Aorta (tissue), 5 donors: ENCODE measurements at regions of chr5 and their contacts with region 1.

Region 1: GRCh38 chr5:7251132-7251531 is 144.8 kb upstream of the ADCY2 start:
- DNase-seq: no peak
- ATAC-seq: no peak
- H3K4me3 ChIP-seq: no peak overlapping the region
- H3K27ac ChIP-seq: no peak overlapping the region
- H3K4me1 ChIP-seq: no peaks in the 10 kb centered on the region
- H3K27me3 ChIP-seq: peaks cover 0 to 1% of the 10 kb centered on the region in 2 donors

Region 2: GRCh38 chr5:7146886-7147285 is 104.2 kb before region 1 on chr5:
- intact Hi-C with region 1: no loop called
- DNase-seq: no peak
- ATAC-seq: no peak
- H3K4me3 ChIP-seq: no peak overlapping the region
- H3K27ac ChIP-seq: no peak overlapping the region
- H3K4me1 ChIP-seq: no peaks in the 10 kb centered on the region
- H3K27me3 ChIP-seq: no peaks in the 10 kb centered on the region

Region 3: DNA sequence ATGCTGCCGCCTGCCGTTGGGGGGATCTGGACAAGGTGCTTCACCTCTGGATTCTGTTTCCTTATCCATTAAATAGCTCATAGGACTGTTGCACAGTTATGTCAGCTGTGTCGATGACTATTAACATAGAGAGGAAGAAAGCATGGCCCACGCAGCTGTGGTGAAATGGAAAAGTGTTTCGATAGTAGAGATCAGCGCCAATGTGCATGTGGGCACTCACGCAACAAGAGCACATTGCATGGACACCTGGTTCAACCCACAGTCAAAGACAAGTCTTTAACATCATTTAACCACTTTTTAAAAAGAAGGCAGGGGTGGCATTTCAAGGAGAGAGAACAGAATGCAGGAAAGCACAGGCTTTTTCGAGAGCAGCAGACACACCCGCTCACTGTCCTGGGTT is 252.4 kb after region 1 on chr5:
- intact Hi-C with region 1: no loop called
- DNase-seq: no peak
- ATAC-seq: no peak
- H3K4me3 ChIP-seq: no peak overlapping the region
- H3K27ac ChIP-seq: no peak overlapping the region
- H3K4me1 ChIP-seq: no peaks in the 10 kb centered on the region
- H3K27me3 ChIP-seq: no peaks in the 10 kb centered on the region

Region 4: DNA sequence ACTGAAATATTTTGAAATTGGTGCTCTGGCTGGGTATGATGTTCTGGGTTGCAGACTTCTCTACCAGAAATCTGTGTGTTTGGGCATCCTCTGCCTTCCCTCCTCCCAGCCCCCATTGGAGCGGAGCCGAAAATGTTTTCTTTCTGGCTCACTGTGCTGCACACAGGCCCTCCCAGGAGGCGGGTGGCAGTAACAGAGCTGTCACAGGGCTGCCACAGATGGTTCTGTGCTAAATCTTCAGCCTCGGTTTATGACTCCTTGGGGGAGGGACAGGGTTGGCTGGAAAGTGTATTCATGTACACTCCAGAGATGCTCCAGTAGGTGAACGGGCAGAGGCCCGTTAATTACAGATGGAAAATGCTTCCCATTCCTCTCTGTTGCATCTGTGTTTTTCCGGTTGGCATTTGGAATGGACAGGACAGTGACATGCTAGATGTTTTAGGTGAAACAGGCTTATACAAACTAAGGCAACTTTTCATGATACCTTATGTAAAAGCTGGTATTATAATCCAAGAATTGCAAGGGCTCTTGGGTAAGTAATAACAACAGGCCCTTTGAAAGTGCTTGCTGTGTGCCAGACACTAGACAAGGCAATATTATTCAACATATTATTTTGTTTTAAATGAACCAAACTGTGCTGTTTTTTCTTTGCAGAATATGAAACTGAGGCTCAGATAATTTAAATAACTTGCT is 325.0 kb after region 1 on chr5:
- intact Hi-C with region 1: no loop called
- DNase-seq: no peak
- ATAC-seq: peak; percentile 38
- H3K4me3 ChIP-seq: no peak overlapping the region
- H3K27ac ChIP-seq: no peak overlapping the region
- H3K4me1 ChIP-seq: no peaks in the 10 kb centered on the region
- H3K27me3 ChIP-seq: no peaks in the 10 kb centered on the region

Region 5: DNA sequence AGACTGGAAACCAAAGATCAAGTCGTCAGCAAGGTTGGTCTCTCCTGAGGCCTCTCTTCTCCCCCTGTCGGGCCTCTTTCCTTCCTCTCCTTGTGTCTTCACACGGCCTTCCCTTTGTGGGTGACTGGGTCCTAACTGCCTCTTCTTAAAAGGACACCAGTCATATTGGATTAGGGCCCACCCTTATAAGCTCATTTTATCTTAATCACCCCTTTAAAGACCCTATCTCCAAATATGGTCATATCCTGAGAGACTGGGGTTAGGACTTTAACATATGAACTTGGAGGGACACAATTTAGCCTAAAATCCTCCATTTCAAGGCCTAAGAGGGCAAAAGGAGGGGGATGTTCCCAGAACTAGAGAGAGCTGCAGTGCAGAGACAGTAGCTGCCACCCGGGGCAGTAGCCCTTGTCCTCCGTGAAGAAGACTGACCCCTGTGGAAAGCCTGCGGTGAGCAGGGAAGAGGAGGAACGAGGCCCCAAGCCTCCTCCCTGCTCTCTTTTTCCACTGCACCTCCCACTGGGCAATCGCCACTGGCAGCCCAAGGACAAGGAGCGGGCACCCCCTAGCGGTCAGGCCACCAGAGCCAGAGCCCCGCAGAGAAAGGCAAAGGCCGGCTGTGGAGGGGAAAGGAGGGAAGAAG is 564.9 kb after region 1 on chr5:
- intact Hi-C with region 1: loop called in 1 of 2 experiments (anchors 10 kb)
- DNase-seq: peak; percentile 90 to 95
- ATAC-seq: peak; percentile 92
- H3K4me3 ChIP-seq: no peak overlapping the region
- H3K27ac ChIP-seq: no peak overlapping the region
- H3K4me1 ChIP-seq: no peaks in the 10 kb centered on the region
- H3K27me3 ChIP-seq: no peaks in the 10 kb centered on the region